Mammary epithelial cell (primary cell): ENCODE measurements at regions of chr19 and their contacts with region 1.

Region 1: GRCh38 chr19:36049080-36049698 is 4.9 kb downstream of the THAP8 start:
- DNase-seq: no peak
- H3K4me3 ChIP-seq: no peak overlapping the region
- H3K27ac ChIP-seq: peak overlapping the region; percentile 16
- H3K4me1 ChIP-seq: peaks cover 12% of the 10 kb centered on the region
- H3K27me3 ChIP-seq: no peaks in the 10 kb centered on the region
- CTCF ChIP-seq: no peak

Region 2: GRCh38 chr19:36014029-36014924 is 34.9 kb before region 1 on chr19 and contains the start of gene ALKBH6:
- CTCF ChIA-PET with region 1: interaction called, 4 read pairs
- dilution Hi-C with region 1: loop called (anchors 5 kb)
- in situ Hi-C with region 1: no loop called
- intact Hi-C with region 1: loop called (anchors 1 kb)
- DNase-seq: peak; percentile 100
- H3K4me3 ChIP-seq: peak within 1 kb of the TSS; percentile 74 to 98 (median 74)
- H3K27ac ChIP-seq: peak within 1 kb of the TSS; percentile 68
- H3K4me1 ChIP-seq: peaks cover 3% of the 10 kb centered on the region
- H3K27me3 ChIP-seq: no peaks in the 10 kb centered on the region
- CTCF ChIP-seq: peak in 1 of 2 donors; percentile 11
- total RNA-seq, gene ALKBH6: 16.2 to 31.4 TPM